ENCODE measurements at regions of chr1 and their contacts with region 1.

Region 1: GRCh38 chr1:153946622-153947241 is at the start of gene DENND4B:
- DNase-seq: peak; percentile 85 to 94 (median 87)
- ATAC-seq: peak; percentile 53 to 81 (median 77)
- H3K4me3 ChIP-seq: peak within 1 kb of the TSS; percentile 67 to 100 (median 92)
- H3K27ac ChIP-seq: peak within 1 kb of the TSS; percentile 97 to 100 (median 100)
- H3K4me1 ChIP-seq: peaks cover 0 to 43% (median 29%) of the 10 kb centered on the region in 12 donors
- H3K27me3 ChIP-seq: no peaks in the 10 kb centered on the region
- CTCF ChIP-seq: peak; percentile 82 to 99 (median 95)
- POLR2A ChIP-seq: no peak
- total RNA-seq, gene DENND4B: 30.5 to 60.7 (median 40.8) TPM

Region 2: GRCh38 chr1:153796791-153797659 is 149.7 kb before region 1 on chr1:
- intact Hi-C with region 1: loop called in 9 of 10 experiments (anchors 1 to 10 kb)
- DNase-seq: peak in 4 of 5 donors; percentile 76 to 83 (median 78)
- ATAC-seq: peak; percentile 9 to 76 (median 61)
- H3K4me3 ChIP-seq: no peak overlapping the region
- H3K27ac ChIP-seq: no peak overlapping the region
- H3K4me1 ChIP-seq: peaks cover 0 to 9% (median 0%) of the 10 kb centered on the region in 12 donors
- H3K27me3 ChIP-seq: no peaks in the 10 kb centered on the region
- CTCF ChIP-seq: peak; percentile 89 to 96 (median 92)
- POLR2A ChIP-seq: no peak

Region 3: DNA sequence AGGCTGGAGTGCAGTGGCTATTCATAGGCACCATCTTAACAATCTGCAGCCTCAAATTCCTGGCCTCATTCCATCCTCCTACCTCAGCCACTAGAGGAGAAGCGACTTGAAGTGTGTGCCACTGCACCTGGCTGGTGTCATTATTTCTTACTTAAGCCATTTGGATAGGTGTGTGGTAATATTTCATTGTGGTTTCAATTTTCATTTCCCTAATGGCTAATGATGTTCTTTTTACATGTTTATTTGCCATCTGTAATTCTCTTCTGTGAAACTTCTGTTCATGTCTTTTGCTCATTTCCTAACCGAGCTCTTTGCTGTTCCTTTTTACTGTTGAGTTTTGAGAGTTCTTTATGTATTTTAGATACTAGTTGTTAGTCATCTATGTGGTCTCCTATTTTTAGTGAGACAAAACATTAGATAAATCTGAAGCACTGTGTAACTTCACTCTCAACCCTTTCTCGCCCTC is 104.7 kb before region 1 on chr1:
- intact Hi-C with region 1: no loop called
- DNase-seq: no peak
- ATAC-seq: peak in 1 of 4 donors; percentile 54
- H3K4me3 ChIP-seq: no peak overlapping the region
- H3K27ac ChIP-seq: no peak overlapping the region
- H3K4me1 ChIP-seq: peaks cover 0 to 14% (median 2%) of the 10 kb centered on the region in 12 donors
- H3K27me3 ChIP-seq: no peaks in the 10 kb centered on the region
- CTCF ChIP-seq: no peak
- POLR2A ChIP-seq: no peak

Region 4: GRCh38 chr1:153866045-153866850 is 80.5 kb before region 1 on chr1:
- intact Hi-C with region 1: no loop called
- DNase-seq: no peak
- ATAC-seq: no peak
- H3K4me3 ChIP-seq: no peak overlapping the region
- H3K27ac ChIP-seq: peak overlapping the region in 1 of 12 donors; percentile 35
- H3K4me1 ChIP-seq: peaks cover 0 to 18% (median 0%) of the 10 kb centered on the region in 12 donors
- H3K27me3 ChIP-seq: no peaks in the 10 kb centered on the region
- CTCF ChIP-seq: no peak
- POLR2A ChIP-seq: no peak

Region 5: GRCh38 chr1:153922972-153923925 is 23.5 kb before region 1 on chr1 and contains the start of gene GATAD2B:
- intact Hi-C with region 1: loop called in 5 of 10 experiments (anchors 1 to 2 kb)
- DNase-seq: peak; percentile 100
- ATAC-seq: peak; percentile 98
- H3K4me3 ChIP-seq: peak within 1 kb of the TSS; percentile 53 to 89 (median 78)
- H3K27ac ChIP-seq: peak within 1 kb of the TSS; percentile 76 to 97 (median 90)
- H3K4me1 ChIP-seq: peaks cover 2 to 45% (median 36%) of the 10 kb centered on the region in 12 donors
- H3K27me3 ChIP-seq: no peaks in the 10 kb centered on the region
- CTCF ChIP-seq: no peak
- POLR2A ChIP-seq: peak in 1 of 2 donors; percentile 43
- total RNA-seq, gene GATAD2B: 18.1 to 53.9 (median 46.2) TPM

Region 6: DNA sequence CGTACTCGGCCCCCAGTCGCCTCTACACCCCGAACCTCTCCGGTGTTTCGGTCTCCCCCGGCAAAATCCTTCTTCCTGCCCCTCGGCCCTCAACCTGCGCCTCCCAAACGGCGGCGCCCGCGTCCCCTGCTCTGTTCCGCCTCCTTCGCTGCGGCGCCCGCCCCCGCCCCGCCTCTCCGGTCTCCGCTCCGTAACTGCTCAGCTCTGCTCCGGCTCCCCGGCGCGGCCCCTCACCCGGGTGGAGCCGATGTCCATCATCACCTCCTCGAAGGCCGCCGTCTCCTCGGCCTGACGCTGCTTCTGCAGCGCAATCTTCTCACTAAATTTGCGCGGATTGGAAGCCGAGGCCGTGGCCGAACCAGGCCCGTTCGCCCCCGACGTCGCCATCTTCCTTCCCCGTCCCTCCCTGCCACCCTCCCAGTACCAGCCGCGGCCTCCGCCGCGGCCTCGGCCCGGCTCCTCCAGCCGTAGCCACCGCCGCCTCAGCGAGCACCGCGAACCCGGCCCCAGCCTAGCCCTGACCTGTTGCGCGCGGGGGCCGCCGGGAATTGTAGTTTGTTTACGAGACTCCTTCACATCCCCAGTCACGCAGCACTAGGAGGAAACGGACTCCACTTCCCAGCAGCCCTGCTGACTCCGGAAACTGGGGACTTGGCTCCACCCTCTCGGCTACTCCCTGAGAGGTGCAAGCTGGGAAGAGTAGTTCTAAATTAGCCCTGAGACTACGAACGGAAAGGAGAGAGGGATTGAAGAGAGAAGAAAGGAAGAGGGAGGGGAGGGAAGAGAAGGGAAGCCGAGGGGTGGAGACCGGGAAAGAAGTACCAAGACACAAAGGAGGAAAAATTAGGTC is 11.6 kb after region 1 on chr1 and contains the start of gene CRTC2:
- intact Hi-C with region 1: loop called in 1 of 10 experiments (anchors 1 kb)
- DNase-seq: peak; percentile 99 to 100 (median 99)
- ATAC-seq: peak; percentile 88 to 94 (median 90)
- H3K4me3 ChIP-seq: peak within 1 kb of the TSS; percentile 82 to 100 (median 93)
- H3K27ac ChIP-seq: peak within 1 kb of the TSS; percentile 87 to 99 (median 94)
- H3K4me1 ChIP-seq: peaks cover 10 to 74% (median 56%) of the 10 kb centered on the region in 12 donors
- H3K27me3 ChIP-seq: no peaks in the 10 kb centered on the region
- CTCF ChIP-seq: peak in 1 of 12 donors; percentile 6
- POLR2A ChIP-seq: peak in 1 of 2 donors; percentile 80
- total RNA-seq, gene CRTC2: 11.0 to 27.8 (median 18.8) TPM

Measured in heart left ventricle (tissue), 16 donors.